CD4-positive, alpha-beta T cell (primary cell): ENCODE measurements at regions of chr3 and their contacts with region 1.

Region 1: GRCh38 chr3:170117134-170117533 is 64.4 kb downstream of the PHC3 start:
- DNase-seq: peak in 3 of 14 experiments; percentile 5 to 10 (median 8)
- ATAC-seq: no peak
- H3K4me3 ChIP-seq: no peak overlapping the region
- H3K4me3 Mint-ChIP-seq: no peak overlapping the region
- H3K27ac ChIP-seq: no peak overlapping the region
- H3K27ac Mint-ChIP-seq: no peak overlapping the region
- H3K4me1 ChIP-seq: no peaks in the 10 kb centered on the region
- H3K4me1 Mint-ChIP-seq: peaks cover 17% of the 10 kb centered on the region
- H3K27me3 ChIP-seq: no peaks in the 10 kb centered on the region
- H3K27me3 Mint-ChIP-seq: no peaks in the 10 kb centered on the region
- CTCF ChIP-seq: no peak

Region 2: DNA sequence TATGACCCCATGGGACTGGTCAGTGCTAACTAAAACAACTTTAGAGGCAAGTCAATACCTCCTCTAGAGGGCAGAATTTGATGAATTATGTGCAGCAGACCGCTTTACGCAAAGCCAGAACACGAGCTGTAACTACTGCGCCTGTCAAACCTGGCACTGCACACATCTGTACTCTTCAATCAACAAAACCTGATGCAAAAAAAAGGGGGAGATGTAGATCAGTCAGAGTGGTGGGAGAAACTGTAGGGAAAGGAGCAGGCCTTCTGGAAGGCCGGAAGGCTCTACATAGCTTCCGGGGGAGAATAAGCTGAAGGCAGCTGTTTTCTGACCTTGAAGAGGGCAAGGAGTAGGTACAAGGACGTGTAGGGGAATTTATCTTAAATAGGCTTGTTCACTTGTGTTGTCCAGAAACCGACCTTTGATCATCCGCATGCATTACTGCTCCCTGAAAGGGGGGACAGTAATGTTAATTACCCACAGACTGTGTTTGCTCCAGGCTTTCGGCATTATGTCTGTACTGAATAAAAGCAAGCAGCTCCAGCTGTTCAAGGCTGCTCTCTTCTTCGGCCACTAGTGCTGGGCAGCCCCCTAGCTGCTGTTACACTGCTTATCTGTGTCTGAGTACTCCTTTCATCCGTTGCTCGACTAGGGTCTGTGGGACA is 38.4 kb before region 1 on chr3:
- CTCF ChIA-PET with region 1: no interaction called
- POLR2A ChIA-PET with region 1: no interaction called
- intact Hi-C with region 1: no loop called
- DNase-seq: no peak
- ATAC-seq: no peak
- H3K4me3 ChIP-seq: no peak overlapping the region
- H3K4me3 Mint-ChIP-seq: no peak overlapping the region
- H3K27ac ChIP-seq: no peak overlapping the region
- H3K27ac Mint-ChIP-seq: no peak overlapping the region
- H3K4me1 ChIP-seq: no peaks in the 10 kb centered on the region
- H3K4me1 Mint-ChIP-seq: peaks cover 5% of the 10 kb centered on the region
- H3K27me3 ChIP-seq: no peaks in the 10 kb centered on the region
- H3K27me3 Mint-ChIP-seq: no peaks in the 10 kb centered on the region
- CTCF ChIP-seq: no peak

Region 3: GRCh38 chr3:170098753-170099152 is 18.4 kb before region 1 on chr3:
- CTCF ChIA-PET with region 1: interaction called, 4 read pairs
- POLR2A ChIA-PET with region 1: no interaction called
- intact Hi-C with region 1: loop called in 1 of 2 experiments (anchors 2 kb)
- DNase-seq: no peak
- ATAC-seq: no peak
- H3K4me3 ChIP-seq: no peak overlapping the region
- H3K4me3 Mint-ChIP-seq: no peak overlapping the region
- H3K27ac ChIP-seq: no peak overlapping the region
- H3K27ac Mint-ChIP-seq: peak overlapping the region; percentile 49
- H3K4me1 ChIP-seq: no peaks in the 10 kb centered on the region
- H3K4me1 Mint-ChIP-seq: no peaks in the 10 kb centered on the region
- H3K27me3 ChIP-seq: no peaks in the 10 kb centered on the region
- H3K27me3 Mint-ChIP-seq: no peaks in the 10 kb centered on the region
- CTCF ChIP-seq: no peak

Region 4: GRCh38 chr3:170128977-170129431 is 11.9 kb after region 1 on chr3:
- CTCF ChIA-PET with region 1: no interaction called
- POLR2A ChIA-PET with region 1: no interaction called
- intact Hi-C with region 1: loop called in 1 of 2 experiments (anchors 2 kb)
- DNase-seq: peak in 2 of 14 experiments; percentile 2 to 18
- ATAC-seq: peak; percentile 21
- H3K4me3 ChIP-seq: no peak overlapping the region
- H3K4me3 Mint-ChIP-seq: peak overlapping the region; percentile 6
- H3K27ac ChIP-seq: peak overlapping the region in 1 of 2 donors; percentile 13
- H3K27ac Mint-ChIP-seq: peak overlapping the region; percentile 54
- H3K4me1 ChIP-seq: peaks cover 13% of the 10 kb centered on the region
- H3K4me1 Mint-ChIP-seq: peaks cover 49% of the 10 kb centered on the region
- H3K27me3 ChIP-seq: no peaks in the 10 kb centered on the region
- H3K27me3 Mint-ChIP-seq: no peaks in the 10 kb centered on the region
- CTCF ChIP-seq: no peak